GM12878 (cell line): ENCODE measurements at regions of chr2 and their contacts with region 1.

Region 1: GRCh38 chr2:705971-706511 is 28.8 kb upstream of the TMEM18 start:
- DNase-seq: peak; percentile 60
- ATAC-seq: peak; percentile 97
- H3K4me3 ChIP-seq: no peak overlapping the region
- H3K27ac ChIP-seq: no peak overlapping the region
- H3K4me1 ChIP-seq: peaks cover 11% of the 10 kb centered on the region
- H3K27me3 ChIP-seq: no peaks in the 10 kb centered on the region
- CTCF ChIP-seq: no peak
- EP300 ChIP-seq: peak in 1 of 2 experiments; percentile 34; a peak in 1 of 4 replicates
- POLR2A ChIP-seq: no peak
- RAD21 ChIP-seq: no peak

Region 2: DNA sequence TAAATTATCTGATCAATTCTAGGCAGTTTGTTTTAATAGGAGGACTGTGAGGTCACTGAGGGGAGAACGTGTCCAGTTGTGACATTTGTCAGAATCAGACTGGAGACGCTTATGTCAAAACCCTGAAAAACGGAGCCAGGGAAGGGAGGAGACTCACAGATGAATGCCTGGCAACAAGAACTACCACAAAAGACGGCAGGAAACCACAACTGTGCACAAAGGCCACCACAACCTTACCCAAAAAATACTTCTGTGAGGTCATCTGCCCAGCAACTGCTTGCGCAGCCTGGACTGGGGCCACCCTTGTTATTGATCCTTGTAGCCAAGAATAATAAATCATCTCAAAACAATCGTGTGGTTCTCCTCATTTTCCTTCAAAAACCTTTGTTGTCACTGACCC is 245.2 kb before region 1 on chr2:
- CTCF ChIA-PET with region 1: no interaction called
- POLR2A ChIA-PET with region 1: no interaction called
- RAD21 ChIA-PET with region 1: no interaction called
- SMC1A ChIA-PET with region 1: no interaction called
- in situ Hi-C with region 1: no loop called
- intact Hi-C with region 1: loop called (anchors 5 kb)
- DNase-seq: no peak
- ATAC-seq: peak; percentile 80
- H3K4me3 ChIP-seq: no peak overlapping the region
- H3K27ac ChIP-seq: no peak overlapping the region
- H3K4me1 ChIP-seq: no peaks in the 10 kb centered on the region
- H3K27me3 ChIP-seq: no peaks in the 10 kb centered on the region; a peak in 2 of 4 replicates
- CTCF ChIP-seq: no peak
- EP300 ChIP-seq: no peak
- POLR2A ChIP-seq: no peak
- RAD21 ChIP-seq: no peak

Region 3: DNA sequence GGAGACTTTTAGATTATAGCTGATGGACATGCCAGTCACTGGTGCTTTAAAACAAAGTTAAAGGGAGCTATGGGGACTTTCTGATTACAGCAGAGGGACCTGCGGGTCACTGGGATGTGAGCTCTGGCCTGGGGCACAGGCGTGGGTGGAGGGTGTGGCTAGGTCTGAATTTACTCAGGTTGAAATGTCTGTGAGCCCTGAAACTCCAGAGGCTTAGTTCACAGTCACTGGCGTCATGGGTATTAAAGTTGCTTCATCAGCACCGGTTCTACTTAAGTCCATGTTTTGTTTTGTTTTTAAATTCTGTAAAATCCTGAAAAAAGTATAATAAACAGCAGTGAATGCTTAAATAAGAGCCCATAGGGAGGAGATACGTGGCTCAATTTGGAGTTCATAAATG is 20.2 kb after region 1 on chr2:
- CTCF ChIA-PET with region 1: no interaction called
- POLR2A ChIA-PET with region 1: no interaction called
- RAD21 ChIA-PET with region 1: interaction called, 3 read pairs
- SMC1A ChIA-PET with region 1: interaction called, 4 read pairs
- in situ Hi-C with region 1: no loop called
- intact Hi-C with region 1: loop called (anchors 1 kb)
- DNase-seq: peak; percentile 41
- ATAC-seq: peak; percentile 92
- H3K4me3 ChIP-seq: peak overlapping the region; percentile 1; the same call in 1 of the 2 replicates
- H3K27ac ChIP-seq: peak overlapping the region; percentile 53
- H3K4me1 ChIP-seq: peaks cover 13% of the 10 kb centered on the region
- H3K27me3 ChIP-seq: no peaks in the 10 kb centered on the region
- CTCF ChIP-seq: no peak
- EP300 ChIP-seq: no peak
- POLR2A ChIP-seq: no peak
- RAD21 ChIP-seq: no peak

Region 4: DNA sequence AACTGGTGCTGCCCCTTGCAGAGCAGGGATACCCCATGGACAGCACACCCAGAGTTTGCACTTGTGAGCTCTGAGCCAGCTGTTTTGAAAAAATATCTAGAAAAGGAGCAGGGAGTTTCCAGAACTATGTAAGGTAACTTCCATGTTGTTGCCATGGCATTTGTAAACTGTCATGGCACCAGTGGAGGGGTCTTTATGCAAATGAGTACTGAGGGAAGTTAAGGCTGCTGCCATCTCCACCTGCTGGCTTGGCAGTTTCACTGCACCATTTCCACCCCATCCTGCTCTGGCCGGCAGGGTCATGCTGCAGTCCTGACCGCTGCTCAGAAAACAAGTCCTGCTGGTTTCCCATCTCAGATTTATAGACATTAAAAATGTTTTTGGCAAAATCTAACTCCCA is 192.3 kb after region 1 on chr2:
- CTCF ChIA-PET with region 1: no interaction called
- POLR2A ChIA-PET with region 1: no interaction called
- RAD21 ChIA-PET with region 1: no interaction called
- SMC1A ChIA-PET with region 1: no interaction called
- in situ Hi-C with region 1: no loop called
- intact Hi-C with region 1: loop called (anchors 2 kb)
- DNase-seq: no peak
- ATAC-seq: peak; percentile 73
- H3K4me3 ChIP-seq: no peak overlapping the region
- H3K27ac ChIP-seq: no peak overlapping the region
- H3K4me1 ChIP-seq: no peaks in the 10 kb centered on the region
- H3K27me3 ChIP-seq: no peaks in the 10 kb centered on the region
- CTCF ChIP-seq: peak in 2 of 3 experiments; percentile 23 to 37; a peak in 4 of 6 replicates
- EP300 ChIP-seq: no peak
- POLR2A ChIP-seq: no peak
- RAD21 ChIP-seq: peak; percentile 34; the same call in 1 of the 2 replicates